HCT116 (cell line): ENCODE measurements at regions of chr7 and their contacts with region 1.

Region 1: DNA sequence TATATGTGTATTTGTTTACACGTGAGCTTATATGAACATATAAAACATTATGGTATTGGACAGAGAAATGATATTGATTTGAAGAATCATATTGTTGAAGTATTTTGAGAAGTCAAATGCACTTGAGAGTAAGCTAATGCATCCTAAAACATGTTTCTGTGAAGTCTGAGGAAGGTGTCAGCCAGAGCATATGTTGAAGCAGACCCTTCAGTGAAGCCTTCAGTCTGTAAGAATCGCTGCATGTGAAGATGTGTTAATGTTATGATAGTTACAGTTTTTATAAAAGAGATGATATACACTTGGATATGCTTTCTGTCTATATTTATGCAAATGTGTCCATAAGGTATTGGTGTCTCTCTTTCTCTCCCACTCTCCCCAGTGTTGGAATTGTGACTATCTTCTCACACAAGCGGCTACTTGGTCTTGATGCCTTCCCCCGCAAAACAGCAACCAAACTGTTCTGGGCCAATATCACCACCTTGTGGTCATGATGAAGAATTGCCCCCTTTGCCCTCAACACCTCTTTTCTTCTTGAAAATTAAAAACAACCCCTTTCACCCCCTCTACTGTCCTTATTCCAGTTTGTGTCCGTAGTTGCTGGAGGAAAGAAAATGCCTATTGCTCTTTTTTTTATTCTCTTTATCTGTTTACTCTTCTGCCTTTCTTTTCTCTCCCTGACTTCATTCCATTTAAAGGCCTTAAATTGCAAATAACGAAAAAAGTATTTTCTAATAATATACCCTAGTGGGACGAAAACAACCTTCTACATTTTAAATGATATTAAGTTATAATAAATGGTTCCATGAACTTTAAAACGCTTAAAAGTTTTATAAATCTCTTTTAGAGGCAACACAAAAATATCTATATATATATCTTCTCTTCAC is 64.9 kb downstream of the IKZF1 start:
- DNase-seq: peak; percentile 50
- ATAC-seq: peak; percentile 66
- H3K4me3 ChIP-seq: no peak overlapping the region
- H3K27ac ChIP-seq: no peak overlapping the region
- H3K4me1 ChIP-seq: no peaks in the 10 kb centered on the region
- H3K27me3 ChIP-seq: 0 out of 2 replicates have a peak, but pooled peaks cover 2% of the 10 kb centered on the region
- CTCF ChIP-seq: peak; percentile 70 to 75 (median 73)
- POLR2A ChIP-seq: no peak
- RAD21 ChIP-seq: peak; percentile 74

Region 2: DNA sequence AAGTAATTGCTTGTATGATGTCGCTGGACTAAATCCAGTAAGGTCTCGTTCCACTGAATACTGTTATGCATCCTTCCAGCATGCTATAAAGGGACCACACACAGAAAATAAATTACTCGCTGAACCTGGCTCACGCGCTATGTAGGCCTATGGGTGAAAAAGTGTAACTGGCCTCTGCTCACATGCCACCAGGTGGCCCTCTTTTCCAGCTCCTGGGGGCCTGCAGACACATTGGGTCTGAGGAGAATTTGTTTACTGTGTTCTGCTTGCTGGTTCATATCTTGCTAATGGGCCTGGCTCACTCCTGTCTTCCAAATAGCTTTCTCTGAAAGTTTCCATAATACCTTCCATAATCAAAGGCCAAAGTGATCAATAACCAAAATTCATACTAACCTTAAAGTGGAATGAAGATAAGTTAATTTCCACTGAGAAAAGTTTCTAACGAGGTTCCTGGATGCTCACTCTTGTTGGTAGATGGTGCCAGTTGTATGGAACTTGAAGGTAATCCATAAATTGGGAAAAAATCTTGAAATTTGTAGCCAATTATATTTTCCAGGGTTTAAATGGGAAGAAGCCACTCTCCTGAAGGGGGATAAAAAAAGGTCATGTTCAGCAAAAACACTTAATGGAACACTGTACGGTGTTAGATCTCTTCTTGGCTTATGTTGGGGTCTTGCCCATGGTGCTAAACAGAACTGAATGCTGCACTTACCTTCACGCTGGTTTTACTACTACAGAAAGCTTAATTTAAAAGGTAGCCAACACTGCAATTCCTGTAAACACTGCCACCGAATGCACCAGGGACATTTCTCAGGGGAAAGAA is 249.4 kb before region 1 on chr7:
- CTCF ChIA-PET with region 1: no interaction called
- POLR2A ChIA-PET with region 1: no interaction called
- RAD21 ChIA-PET with region 1: no interaction called
- intact Hi-C with region 1: loop called (anchors 1 kb)
- DNase-seq: no peak
- ATAC-seq: peak; percentile 97
- H3K4me3 ChIP-seq: no peak overlapping the region
- H3K27ac ChIP-seq: no peak overlapping the region
- H3K4me1 ChIP-seq: no peaks in the 10 kb centered on the region
- H3K27me3 ChIP-seq: peaks cover 5% of the 10 kb centered on the region; the same call in 1 of the 2 replicates
- CTCF ChIP-seq: peak; percentile 46 to 77 (median 73); a peak in 5 of 6 replicates
- POLR2A ChIP-seq: peak; percentile 84
- RAD21 ChIP-seq: peak; percentile 65

Region 3: GRCh38 chr7:50142425-50143017 is 226.9 kb before region 1 on chr7:
- CTCF ChIA-PET with region 1: interaction called, 3 read pairs
- POLR2A ChIA-PET with region 1: no interaction called
- RAD21 ChIA-PET with region 1: no interaction called
- intact Hi-C with region 1: loop called (anchors 2 kb)
- DNase-seq: peak; percentile 36
- ATAC-seq: peak; percentile 57; the same call in 1 of the 2 replicates
- H3K4me3 ChIP-seq: no peak overlapping the region
- H3K27ac ChIP-seq: no peak overlapping the region
- H3K4me1 ChIP-seq: no peaks in the 10 kb centered on the region
- H3K27me3 ChIP-seq: no peaks in the 10 kb centered on the region
- CTCF ChIP-seq: peak; percentile 52 to 62 (median 57); a peak in 5 of 6 replicates
- POLR2A ChIP-seq: no peak
- RAD21 ChIP-seq: peak; percentile 67

Region 4: DNA sequence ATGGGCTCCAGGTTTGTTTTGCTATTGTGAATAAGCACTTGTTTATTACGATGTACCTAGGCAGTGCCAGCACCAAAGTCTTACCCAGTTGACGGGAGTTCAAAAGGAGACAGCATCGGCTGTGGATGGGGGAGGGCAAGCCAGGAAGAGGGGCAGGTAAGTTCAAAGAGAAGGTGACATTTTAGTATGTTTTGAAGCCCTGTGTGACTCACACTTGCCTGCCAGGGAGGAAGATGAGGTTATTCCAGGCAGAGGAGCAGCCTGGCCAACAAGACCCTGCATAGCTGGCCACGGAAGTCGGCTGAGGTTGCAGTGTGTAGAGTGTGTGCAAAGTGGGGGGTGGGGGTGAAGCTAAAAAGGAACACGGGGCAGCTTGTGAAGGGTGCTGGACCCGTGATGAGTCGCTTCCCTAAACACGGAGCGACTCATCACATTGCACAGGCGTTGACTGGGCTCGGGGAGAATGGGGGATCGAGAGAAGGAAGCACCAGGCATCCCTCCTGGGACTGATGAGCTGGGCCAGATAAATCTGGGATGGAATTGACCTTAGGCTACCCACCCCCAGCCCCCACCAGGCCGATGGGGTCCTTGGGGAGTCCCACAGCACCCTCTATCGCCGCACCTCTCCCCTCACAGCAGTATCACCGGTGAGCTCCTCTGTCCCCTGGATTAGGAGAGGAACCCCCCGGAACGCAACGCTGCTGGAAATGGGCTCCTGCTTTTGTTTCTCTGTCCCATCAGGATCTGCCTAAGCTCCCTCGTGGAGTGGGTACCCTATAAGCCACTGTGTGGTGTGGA is 162.7 kb before region 1 on chr7:
- CTCF ChIA-PET with region 1: interaction called, 3 read pairs
- POLR2A ChIA-PET with region 1: no interaction called
- RAD21 ChIA-PET with region 1: interaction called in 1 of 2 experiments, 5 read pairs
- intact Hi-C with region 1: loop called (anchors 1 kb)
- DNase-seq: peak; percentile 38
- ATAC-seq: peak; percentile 76
- H3K4me3 ChIP-seq: peak overlapping the region in 1 of 2 experiments; percentile 43; a peak in 2 of 4 replicates
- H3K27ac ChIP-seq: no peak overlapping the region; the same call in 1 of the 2 replicates
- H3K4me1 ChIP-seq: peaks cover 18 to 38% of the 10 kb centered on the region in 2 experiments; a peak in 3 of 4 replicates
- H3K27me3 ChIP-seq: no peaks in the 10 kb centered on the region
- CTCF ChIP-seq: no peak
- POLR2A ChIP-seq: no peak
- RAD21 ChIP-seq: no peak

Region 5: GRCh38 chr7:50497068-50497642 is 127.8 kb after region 1 on chr7:
- CTCF ChIA-PET with region 1: no interaction called
- POLR2A ChIA-PET with region 1: no interaction called
- RAD21 ChIA-PET with region 1: no interaction called
- intact Hi-C with region 1: no loop called
- DNase-seq: no peak
- ATAC-seq: no peak
- H3K4me3 ChIP-seq: no peak overlapping the region
- H3K27ac ChIP-seq: no peak overlapping the region
- H3K4me1 ChIP-seq: no peaks in the 10 kb centered on the region
- H3K27me3 ChIP-seq: peaks cover 13% of the 10 kb centered on the region; the same call in 1 of the 2 replicates
- CTCF ChIP-seq: no peak
- POLR2A ChIP-seq: no peak
- RAD21 ChIP-seq: no peak

Region 6: DNA sequence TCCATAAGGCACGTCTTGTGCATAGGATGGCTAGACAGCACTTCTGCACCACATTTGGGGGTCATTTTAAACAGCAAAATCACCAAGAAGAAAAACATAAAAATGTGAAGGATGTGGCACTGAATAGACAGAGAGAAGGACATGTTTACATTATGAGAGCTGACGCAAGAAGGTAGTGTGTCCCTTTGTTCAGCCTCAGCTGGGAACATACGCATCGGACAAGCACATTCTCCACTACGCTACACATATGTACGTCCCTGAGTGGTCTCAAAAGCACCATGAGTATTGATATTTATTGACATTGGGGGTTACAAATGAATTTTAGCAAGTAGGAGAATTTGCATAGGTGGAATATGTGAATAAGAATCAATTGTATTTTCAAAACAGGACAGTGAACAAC is 175.6 kb after region 1 on chr7:
- CTCF ChIA-PET with region 1: no interaction called
- POLR2A ChIA-PET with region 1: no interaction called
- RAD21 ChIA-PET with region 1: no interaction called
- intact Hi-C with region 1: no loop called
- DNase-seq: no peak
- ATAC-seq: no peak
- H3K4me3 ChIP-seq: no peak overlapping the region
- H3K27ac ChIP-seq: no peak overlapping the region
- H3K4me1 ChIP-seq: no peaks in the 10 kb centered on the region
- H3K27me3 ChIP-seq: no peaks in the 10 kb centered on the region
- CTCF ChIP-seq: no peak
- POLR2A ChIP-seq: no peak
- RAD21 ChIP-seq: no peak